ENCODE measurements at regions of chr5 and their contacts with region 1.

Region 1: GRCh38 chr5:159923008-159923407 is 6.7 kb downstream of the ADRA1B start:
- DNase-seq: no peak
- H3K4me3 ChIP-seq: no peak overlapping the region
- H3K27ac ChIP-seq: no peak overlapping the region
- H3K4me1 ChIP-seq: no peaks in the 10 kb centered on the region
- H3K27me3 ChIP-seq: no peaks in the 10 kb centered on the region
- CTCF ChIP-seq: no peak
- EP300 ChIP-seq: no peak
- POLR2A ChIP-seq: no peak

Region 2: GRCh38 chr5:159430361-159431012 is 492.5 kb before region 1 on chr5:
- intact Hi-C with region 1: loop called in 1 of 4 experiments (anchors 5 kb)
- DNase-seq: no peak
- H3K4me3 ChIP-seq: no peak overlapping the region
- H3K27ac ChIP-seq: no peak overlapping the region
- H3K4me1 ChIP-seq: peaks cover 1% of the 10 kb centered on the region
- H3K27me3 ChIP-seq: no peaks in the 10 kb centered on the region
- CTCF ChIP-seq: no peak
- EP300 ChIP-seq: no peak
- POLR2A ChIP-seq: no peak

Region 3: GRCh38 chr5:159864885-159865691 is 57.9 kb before region 1 on chr5:
- intact Hi-C with region 1: no loop called
- DNase-seq: peak in 2 of 5 donors; percentile 21 to 45
- H3K4me3 ChIP-seq: peak overlapping the region; percentile 1
- H3K27ac ChIP-seq: peak overlapping the region in 1 of 2 donors; percentile 44
- H3K4me1 ChIP-seq: peaks cover 1% of the 10 kb centered on the region
- H3K27me3 ChIP-seq: no peaks in the 10 kb centered on the region
- CTCF ChIP-seq: no peak
- EP300 ChIP-seq: no peak
- POLR2A ChIP-seq: no peak

Region 4: GRCh38 chr5:160071516-160071915 is 148.5 kb after region 1 on chr5:
- intact Hi-C with region 1: no loop called
- DNase-seq: peak; percentile 39 to 66 (median 48)
- H3K4me3 ChIP-seq: no peak overlapping the region
- H3K27ac ChIP-seq: no peak overlapping the region
- H3K4me1 ChIP-seq: peaks cover 1% of the 10 kb centered on the region
- H3K27me3 ChIP-seq: no peaks in the 10 kb centered on the region
- CTCF ChIP-seq: no peak
- EP300 ChIP-seq: no peak
- POLR2A ChIP-seq: no peak

Measured in ovary (tissue), 10 donors.